ENCODE measurements at regions of chr13 and their contacts with region 1.

Region 1: GRCh38 chr13:46321494-46322225 is 65.4 kb downstream of the RUBCNL start:
- DNase-seq: peak; percentile 89
- H3K4me3 Mint-ChIP-seq: peak overlapping the region; percentile 81
- H3K27ac Mint-ChIP-seq: peak overlapping the region; percentile 93
- H3K4me1 Mint-ChIP-seq: peaks cover 36% of the 10 kb centered on the region
- H3K27me3 Mint-ChIP-seq: no peaks in the 10 kb centered on the region

Region 2: DNA sequence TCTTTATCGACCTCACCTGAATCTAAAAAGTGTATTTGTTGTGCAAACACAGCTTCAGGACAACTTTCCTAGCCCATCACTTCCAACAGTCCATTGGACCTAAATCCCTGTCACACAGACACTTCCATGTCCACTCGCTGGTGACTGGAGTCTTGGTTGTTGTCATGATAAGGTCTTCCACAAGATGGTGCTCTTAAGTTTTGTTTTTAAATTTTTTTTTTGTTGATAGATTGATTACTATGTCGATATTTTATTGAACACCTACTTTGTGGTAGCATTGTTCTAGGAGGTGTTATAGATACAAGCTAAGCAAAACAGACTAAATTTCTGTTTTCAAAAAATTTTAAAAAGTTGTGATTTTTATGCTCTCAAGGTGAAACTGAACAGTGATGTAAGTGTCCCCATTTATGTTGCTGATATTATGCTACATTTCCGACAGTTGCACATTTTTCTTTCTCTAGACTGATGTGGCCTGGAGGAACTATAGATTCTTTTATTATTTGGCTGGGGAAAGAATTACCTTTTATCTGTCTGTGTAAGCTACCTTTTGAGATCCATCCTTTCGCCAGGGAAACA is 698.1 kb before region 1 on chr13:
- CTCF ChIA-PET with region 1: interaction called, 6 read pairs
- intact Hi-C with region 1: loop called (anchors 1 kb)
- DNase-seq: no peak
- H3K4me3 Mint-ChIP-seq: no peak overlapping the region
- H3K27ac Mint-ChIP-seq: no peak overlapping the region
- H3K4me1 Mint-ChIP-seq: no peaks in the 10 kb centered on the region
- H3K27me3 Mint-ChIP-seq: peaks cover 32% of the 10 kb centered on the region

Region 3: DNA sequence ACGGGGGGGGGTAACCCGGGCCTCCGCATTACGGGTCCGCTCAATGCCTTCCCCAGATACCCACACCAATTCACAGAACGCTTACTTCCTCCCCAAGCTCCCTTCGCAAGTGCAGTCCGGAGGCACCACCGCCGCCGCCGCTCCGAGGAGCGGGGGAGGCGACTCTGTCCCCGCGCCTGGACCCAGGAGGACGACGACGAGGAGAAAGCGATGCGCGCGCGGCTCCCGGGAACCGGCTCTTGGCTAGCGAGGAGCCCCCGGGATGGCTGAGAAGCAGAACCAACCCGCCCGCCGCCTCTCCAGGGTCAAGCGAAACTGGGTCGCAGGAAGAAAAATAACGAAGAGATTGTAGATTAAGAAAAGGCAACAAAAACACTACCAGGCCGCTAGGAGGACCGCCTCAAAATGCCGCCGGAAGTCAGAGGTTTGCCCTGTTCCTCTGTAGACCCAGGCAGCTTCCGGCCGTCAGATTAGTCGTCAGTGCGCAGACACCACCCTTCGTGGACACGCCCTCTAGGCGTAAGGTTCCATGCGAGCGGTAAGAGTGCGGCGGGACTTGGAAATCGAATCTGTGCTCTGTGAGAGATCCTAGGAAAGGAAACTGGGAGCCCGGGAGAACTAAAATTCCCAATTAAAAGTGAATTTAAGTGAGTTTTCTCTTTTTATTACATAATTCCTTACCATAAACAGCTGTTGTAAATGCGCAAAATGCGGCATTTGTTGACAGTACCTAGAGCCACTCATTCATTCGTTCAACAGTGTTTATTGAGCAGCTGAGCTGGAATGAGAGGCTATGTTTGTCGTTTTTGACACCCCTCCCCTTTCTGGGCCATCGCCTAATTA is 269.1 kb before region 1 on chr13 and contains the start of gene ZC3H13:
- CTCF ChIA-PET with region 1: no interaction called
- intact Hi-C with region 1: loop called (anchors 1 kb)
- DNase-seq: peak; percentile 97
- H3K4me3 Mint-ChIP-seq: peak within 1 kb of the TSS; percentile 81
- H3K27ac Mint-ChIP-seq: peak within 1 kb of the TSS; percentile 94
- H3K4me1 Mint-ChIP-seq: peaks cover 29% of the 10 kb centered on the region
- H3K27me3 Mint-ChIP-seq: peaks cover 4% of the 10 kb centered on the region
- total RNA-seq, gene ZC3H13: 38.2 to 42.2 TPM

Region 4: GRCh38 chr13:46160471-46161066 is 161.1 kb before region 1 on chr13:
- CTCF ChIA-PET with region 1: interaction called, 3 read pairs
- intact Hi-C with region 1: loop called (anchors 2 kb)
- DNase-seq: peak; percentile 51
- H3K4me3 Mint-ChIP-seq: peak overlapping the region; percentile 51
- H3K27ac Mint-ChIP-seq: peak overlapping the region; percentile 94
- H3K4me1 Mint-ChIP-seq: peaks cover 67% of the 10 kb centered on the region
- H3K27me3 Mint-ChIP-seq: no peaks in the 10 kb centered on the region

Region 5: GRCh38 chr13:46295491-46296114 is 26.1 kb before region 1 on chr13:
- CTCF ChIA-PET with region 1: interaction called, 27 read pairs
- intact Hi-C with region 1: loop called (anchors 1 kb)
- DNase-seq: peak; percentile 76
- H3K4me3 Mint-ChIP-seq: peak overlapping the region; percentile 61
- H3K27ac Mint-ChIP-seq: peak overlapping the region; percentile 94
- H3K4me1 Mint-ChIP-seq: peaks cover 59% of the 10 kb centered on the region
- H3K27me3 Mint-ChIP-seq: no peaks in the 10 kb centered on the region